Endothelial cell of umbilical vein (primary cell): ENCODE measurements at regions of chr19 and their contacts with region 1.

Region 1: DNA sequence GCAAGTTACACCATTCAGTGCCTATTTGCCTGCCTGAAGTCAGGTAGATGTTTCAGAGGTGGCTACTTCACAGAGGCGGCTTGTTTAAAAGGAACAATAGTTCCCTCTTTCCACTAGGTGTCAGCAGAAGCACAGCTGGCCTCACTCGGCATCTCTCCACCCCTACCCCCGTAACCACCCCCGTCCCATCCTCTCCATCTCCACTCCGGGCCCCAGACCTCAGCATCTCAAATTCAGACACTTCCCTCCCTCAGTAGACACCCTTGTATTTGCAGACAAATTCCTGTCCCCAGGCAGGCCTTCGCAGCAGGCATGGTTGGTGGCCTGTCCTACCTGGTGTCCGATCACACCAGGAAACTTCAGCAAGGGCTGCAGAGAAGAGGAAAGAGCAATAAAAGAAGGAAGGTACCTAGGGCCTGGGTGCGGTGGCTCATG is 9.1 kb upstream of the DPP9 start:
- DNase-seq: peak; percentile 48
- H3K4me3 ChIP-seq: no peak overlapping the region
- H3K27ac ChIP-seq: no peak overlapping the region
- H3K4me1 ChIP-seq: no peaks in the 10 kb centered on the region
- H3K27me3 ChIP-seq: no peaks in the 10 kb centered on the region
- CTCF ChIP-seq: peak; percentile 44 to 74
- POLR2A ChIP-seq: no peak

Region 2: GRCh38 chr19:4547303-4548237 is 185.1 kb before region 1 on chr19:
- CTCF ChIA-PET with region 1: no interaction called
- POLR2A ChIA-PET with region 1: no interaction called
- dilution Hi-C with region 1: no loop called
- intact Hi-C with region 1: no loop called
- DNase-seq: peak; percentile 26
- H3K4me3 ChIP-seq: no peak overlapping the region
- H3K27ac ChIP-seq: no peak overlapping the region
- H3K4me1 ChIP-seq: no peaks in the 10 kb centered on the region
- H3K27me3 ChIP-seq: no peaks in the 10 kb centered on the region
- CTCF ChIP-seq: peak; percentile 31 to 60
- POLR2A ChIP-seq: no peak

Region 3: DNA sequence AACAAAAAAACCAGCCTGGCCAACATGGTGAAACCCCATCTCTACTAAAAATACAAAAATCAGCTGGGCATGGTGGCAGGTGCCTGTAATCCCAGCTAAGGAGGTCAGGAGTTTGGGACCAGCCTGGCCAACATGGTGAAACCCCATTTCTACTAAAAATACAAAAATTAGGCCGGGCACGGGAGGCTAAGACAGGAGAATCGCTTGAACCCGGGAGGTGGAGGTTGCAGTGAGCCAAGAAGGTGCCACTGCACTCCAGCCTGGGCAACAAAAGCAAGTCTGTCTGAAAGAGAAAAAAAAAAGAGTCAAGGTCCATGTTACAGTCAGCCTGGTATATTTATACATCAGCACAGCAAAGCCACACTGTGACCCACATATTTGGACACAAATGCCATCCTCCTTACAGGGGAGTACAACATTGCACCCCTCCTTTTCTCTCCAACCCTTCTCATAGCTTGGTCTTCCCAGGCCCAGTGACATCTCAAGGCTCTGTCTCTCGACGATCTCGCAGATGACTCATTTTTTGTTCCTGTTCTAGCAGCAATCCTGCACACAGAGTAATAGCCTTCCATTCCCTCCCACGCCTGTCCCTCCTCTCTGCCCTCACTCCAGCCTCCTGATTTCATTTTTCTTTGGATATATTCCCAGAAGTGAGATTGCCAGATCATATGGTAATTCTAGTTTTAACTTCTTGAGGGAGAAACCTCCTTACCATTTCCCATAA is 11.9 kb after region 1 on chr19:
- CTCF ChIA-PET with region 1: no interaction called
- POLR2A ChIA-PET with region 1: no interaction called
- dilution Hi-C with region 1: no loop called
- intact Hi-C with region 1: no loop called
- DNase-seq: peak; percentile 51
- H3K4me3 ChIP-seq: no peak overlapping the region
- H3K27ac ChIP-seq: no peak overlapping the region
- H3K4me1 ChIP-seq: no peaks in the 10 kb centered on the region
- H3K27me3 ChIP-seq: peaks cover 0 to 5% of the 10 kb centered on the region in 2 experiments
- CTCF ChIP-seq: no peak
- POLR2A ChIP-seq: no peak

Region 4: GRCh38 chr19:4803736-4804695 is 71.3 kb after region 1 on chr19:
- CTCF ChIA-PET with region 1: interaction called, 17 read pairs
- POLR2A ChIA-PET with region 1: no interaction called
- dilution Hi-C with region 1: no loop called
- intact Hi-C with region 1: loop called (anchors 1 kb)
- DNase-seq: peak; percentile 56
- H3K4me3 ChIP-seq: no peak overlapping the region
- H3K27ac ChIP-seq: no peak overlapping the region
- H3K4me1 ChIP-seq: no peaks in the 10 kb centered on the region
- H3K27me3 ChIP-seq: no peaks in the 10 kb centered on the region
- CTCF ChIP-seq: peak; percentile 77 to 95
- POLR2A ChIP-seq: no peak